Activated CD8-positive, alpha-beta T cell treated with anti-CD3 and anti-CD28 coated beads for 36 hours (primary cell): ENCODE measurements at regions of chr5 and their contacts with region 1.

Region 1: GRCh38 chr5:135944967-135945560 is 9.7 kb downstream of the LECT2 start:
- DNase-seq: peak; percentile 59
- ATAC-seq: no peak
- H3K4me3 Mint-ChIP-seq: no peak overlapping the region
- H3K27ac Mint-ChIP-seq: no peak overlapping the region
- H3K4me1 Mint-ChIP-seq: no peaks in the 10 kb centered on the region
- H3K27me3 Mint-ChIP-seq: peaks cover 15% of the 10 kb centered on the region
- CTCF ChIP-seq: peak; percentile 70

Region 2: GRCh38 chr5:136080483-136081216 is 135.6 kb after region 1 on chr5:
- CTCF ChIA-PET with region 1: interaction called, 3 read pairs
- POLR2A ChIA-PET with region 1: no interaction called
- intact Hi-C with region 1: loop called (anchors 5 kb)
- DNase-seq: peak; percentile 87
- ATAC-seq: peak; percentile 95
- H3K4me3 Mint-ChIP-seq: peak overlapping the region; percentile 67
- H3K27ac Mint-ChIP-seq: peak overlapping the region; percentile 45
- H3K4me1 Mint-ChIP-seq: peaks cover 2% of the 10 kb centered on the region
- H3K27me3 Mint-ChIP-seq: peaks cover 39% of the 10 kb centered on the region
- CTCF ChIP-seq: no peak

Region 3: DNA sequence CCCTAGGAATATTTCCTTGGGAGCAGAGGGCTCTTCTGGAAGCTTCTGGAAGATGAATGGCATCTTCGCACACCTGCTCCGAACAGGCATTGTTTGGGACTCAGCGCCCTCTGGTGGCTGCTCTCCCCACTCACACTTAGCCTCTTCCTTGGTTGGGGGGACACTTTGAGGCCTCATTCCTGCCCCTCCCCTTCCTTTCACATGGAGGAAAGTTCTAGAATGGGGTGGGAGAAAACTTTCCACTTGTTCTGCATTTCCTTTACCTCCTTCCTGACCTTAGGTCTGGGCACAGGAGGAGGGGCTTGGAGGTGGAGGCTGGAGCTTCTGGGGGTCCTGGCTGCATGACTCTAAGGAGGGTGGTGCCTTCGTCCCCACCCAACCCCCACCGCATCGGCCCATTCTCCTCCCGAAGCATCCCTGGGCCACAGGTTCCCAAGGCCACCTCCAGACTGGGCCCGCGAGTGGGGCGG is 267.2 kb after region 1 on chr5:
- CTCF ChIA-PET with region 1: no interaction called
- POLR2A ChIA-PET with region 1: no interaction called
- intact Hi-C with region 1: loop called (anchors 2 kb)
- DNase-seq: peak; percentile 62
- ATAC-seq: no peak
- H3K4me3 Mint-ChIP-seq: no peak overlapping the region
- H3K27ac Mint-ChIP-seq: no peak overlapping the region
- H3K4me1 Mint-ChIP-seq: no peaks in the 10 kb centered on the region
- H3K27me3 Mint-ChIP-seq: peaks cover 17% of the 10 kb centered on the region
- CTCF ChIP-seq: peak; percentile 80